Activated T-helper 1 cell treated with anti-CD3 and anti-CD28 coated beads, Interleukin-12 subunit alpha, Interleukin-12 subunit beta, Interleukin-2, Interleukin-4 antibody, amounts not matched to agents 30 ng/mL and 10 ng/mL and 1 ng/mL, durations not matched to agents 14 hours and 24 hours and 36 hours (primary cell): ENCODE measurements at regions of chr1 and their contacts with region 1.

Region 1: GRCh38 chr1:8649027-8649426 is 168.4 kb downstream of the RERE start:
- DNase-seq: no peak
- H3K4me3 Mint-ChIP-seq: no peak overlapping the region
- H3K27ac Mint-ChIP-seq: no peak overlapping the region
- H3K4me1 Mint-ChIP-seq: peaks cover 76% of the 10 kb centered on the region
- H3K27me3 Mint-ChIP-seq: no peaks in the 10 kb centered on the region

Region 2: DNA sequence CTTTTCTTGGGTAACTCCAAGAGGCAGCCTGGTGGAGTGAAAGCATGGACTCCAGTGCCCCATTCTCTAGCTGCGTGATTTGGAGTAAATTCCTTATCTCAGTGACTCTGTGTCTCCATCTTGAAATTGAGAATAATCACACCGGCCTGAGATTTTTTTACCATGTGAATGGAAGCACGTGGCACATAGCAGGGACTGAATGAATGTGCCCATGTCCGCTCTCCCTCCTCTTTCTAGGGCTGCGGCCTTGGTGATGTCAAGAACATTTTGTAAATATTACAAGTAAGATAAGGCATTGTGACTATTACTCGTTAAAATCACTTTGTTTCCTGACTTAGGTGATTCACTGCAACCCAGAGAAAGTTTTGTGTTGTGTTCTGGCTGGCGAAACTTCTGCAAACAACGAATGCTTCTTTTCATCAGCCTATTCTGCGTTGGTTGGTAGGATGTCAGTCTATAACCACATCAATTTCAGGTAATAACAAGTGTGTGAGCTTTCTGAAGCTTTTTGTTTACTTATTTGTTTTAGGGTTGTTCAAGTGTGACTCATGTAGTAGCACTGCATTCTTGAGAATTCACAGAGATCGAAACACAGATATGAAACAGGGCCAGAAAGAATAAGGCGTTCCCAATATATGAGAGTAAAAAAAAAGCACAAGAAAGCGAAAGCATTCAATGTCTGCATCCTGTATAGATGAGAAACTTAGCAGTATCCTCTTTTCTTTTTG is 466.8 kb before region 1 on chr1:
- intact Hi-C with region 1: no loop called
- DNase-seq: peak; percentile 26
- H3K4me3 Mint-ChIP-seq: peak overlapping the region; percentile 53
- H3K27ac Mint-ChIP-seq: peak overlapping the region; percentile 70
- H3K4me1 Mint-ChIP-seq: peaks cover 21% of the 10 kb centered on the region
- H3K27me3 Mint-ChIP-seq: peaks cover 7% of the 10 kb centered on the region

Region 3: DNA sequence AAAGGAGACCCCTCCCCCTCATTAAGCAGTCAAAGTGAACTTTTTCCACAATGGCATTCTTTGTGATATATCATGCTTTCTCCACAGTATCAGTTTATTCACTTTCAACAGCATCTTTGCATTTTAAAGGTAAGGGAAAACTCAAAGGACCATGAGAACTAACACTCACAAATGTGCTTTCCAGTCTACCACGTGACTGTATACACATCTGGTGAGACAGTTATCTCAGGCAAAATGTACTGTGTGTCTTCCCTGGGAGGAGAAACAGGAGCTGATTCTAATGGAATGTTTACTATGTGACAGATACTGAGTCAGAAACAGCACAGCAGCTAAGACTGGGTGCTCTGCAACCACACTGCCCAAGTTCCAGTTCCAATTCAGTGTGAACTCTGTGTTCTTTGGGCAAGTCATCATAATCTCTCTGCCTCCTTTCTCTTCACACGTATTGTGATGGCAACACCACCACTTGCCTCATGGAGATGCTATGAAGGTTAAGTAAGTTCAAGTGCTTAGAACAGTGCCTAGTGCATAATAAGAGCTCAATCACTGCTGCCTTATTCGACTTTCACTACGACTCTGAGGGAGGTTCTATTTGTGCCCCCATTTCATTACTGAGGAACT is 252.1 kb before region 1 on chr1:
- intact Hi-C with region 1: loop called (anchors 1 kb)
- DNase-seq: no peak
- H3K4me3 Mint-ChIP-seq: no peak overlapping the region
- H3K27ac Mint-ChIP-seq: peak overlapping the region; percentile 71
- H3K4me1 Mint-ChIP-seq: peaks cover 63% of the 10 kb centered on the region
- H3K27me3 Mint-ChIP-seq: no peaks in the 10 kb centered on the region

Region 4: GRCh38 chr1:8540261-8540941 is 108.6 kb before region 1 on chr1:
- intact Hi-C with region 1: loop called (anchors 1 kb)
- DNase-seq: no peak
- H3K4me3 Mint-ChIP-seq: peak overlapping the region; percentile 65
- H3K27ac Mint-ChIP-seq: peak overlapping the region; percentile 91
- H3K4me1 Mint-ChIP-seq: peaks cover 51% of the 10 kb centered on the region
- H3K27me3 Mint-ChIP-seq: no peaks in the 10 kb centered on the region

Region 5: DNA sequence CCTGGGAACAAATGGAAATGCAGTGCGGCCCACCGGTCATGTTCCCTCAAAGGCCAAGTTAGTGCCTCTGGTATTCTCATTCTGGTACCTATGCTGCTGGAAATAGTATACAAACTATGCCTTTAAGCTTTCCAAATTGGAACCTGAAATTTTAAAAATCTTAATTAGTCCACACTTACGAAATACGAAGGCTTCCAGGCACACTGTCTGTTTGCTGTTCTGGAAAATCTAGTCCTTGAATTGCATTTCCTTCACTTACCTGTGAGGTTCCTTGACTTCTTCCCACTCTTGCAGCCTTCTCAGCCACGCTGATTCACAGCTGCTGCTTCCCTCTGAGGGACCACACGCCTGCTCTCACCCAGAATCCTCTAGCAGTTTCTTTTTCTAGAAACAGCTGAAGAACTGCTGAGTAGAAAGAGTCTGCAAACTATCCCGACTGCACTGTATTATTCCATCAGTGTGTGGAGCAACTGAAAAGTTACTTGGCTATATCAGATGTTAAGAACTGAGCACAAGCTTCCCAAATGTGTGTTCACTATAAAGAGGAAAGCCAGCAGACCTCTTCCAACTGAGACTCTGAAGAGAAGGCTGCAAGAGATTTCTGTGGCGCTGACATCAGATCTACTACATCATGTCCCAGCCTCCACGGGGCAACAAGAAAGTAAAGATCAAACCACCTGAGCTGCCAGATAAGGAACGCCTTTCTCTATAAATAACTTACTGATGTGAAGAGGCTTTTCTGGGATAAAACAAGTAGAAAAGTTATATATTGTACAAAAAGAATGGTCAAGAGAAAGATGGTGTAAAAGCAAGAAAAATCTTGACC is 58.3 kb before region 1 on chr1:
- intact Hi-C with region 1: no loop called
- DNase-seq: no peak
- H3K4me3 Mint-ChIP-seq: peak overlapping the region; percentile 6
- H3K27ac Mint-ChIP-seq: peak overlapping the region; percentile 15
- H3K4me1 Mint-ChIP-seq: peaks cover 40% of the 10 kb centered on the region
- H3K27me3 Mint-ChIP-seq: no peaks in the 10 kb centered on the region

Region 6: DNA sequence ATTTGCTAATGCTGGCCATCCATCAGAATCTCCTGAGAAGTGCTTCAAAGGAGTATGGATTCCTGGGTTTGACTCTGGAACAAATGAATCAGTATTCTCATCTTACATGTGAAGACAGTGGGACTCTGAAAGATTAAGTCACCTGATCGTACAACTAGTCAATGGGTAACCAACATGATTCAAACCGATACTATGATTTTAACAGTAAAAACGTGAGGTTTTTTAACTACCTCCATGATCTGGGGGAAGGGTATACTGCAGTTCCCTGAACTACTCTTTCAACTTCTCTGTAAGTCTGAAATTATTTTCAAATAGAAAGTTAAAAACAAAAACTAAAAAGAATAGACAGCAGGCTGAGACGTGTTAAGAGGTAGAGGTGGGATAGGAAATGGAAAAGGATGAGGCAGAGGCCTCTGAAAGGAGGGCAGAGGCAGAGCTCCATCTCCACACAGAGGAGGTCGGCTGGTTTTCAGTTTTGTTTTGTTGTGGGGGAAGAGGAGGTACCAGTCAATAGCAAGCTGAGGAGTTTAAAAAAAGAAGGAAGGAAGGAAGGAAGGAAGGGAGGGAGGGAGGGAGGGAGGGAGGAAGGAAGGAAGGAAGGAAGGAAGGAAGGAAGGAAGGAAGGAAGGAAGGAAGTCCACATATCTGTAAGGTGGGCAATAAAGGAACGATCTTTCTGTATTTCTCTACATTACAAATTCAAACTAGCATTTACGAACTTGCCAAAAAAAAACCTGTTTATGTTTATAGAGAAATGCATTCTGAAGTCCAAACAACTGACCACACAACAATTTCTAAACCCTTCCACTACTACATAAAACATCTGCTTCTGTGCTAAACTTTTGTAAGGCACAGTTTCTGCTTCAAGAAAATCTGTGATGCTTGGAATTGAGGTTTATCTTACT is 44.7 kb before region 1 on chr1:
- intact Hi-C with region 1: loop called (anchors 1 kb)
- DNase-seq: peak; percentile 34
- H3K4me3 Mint-ChIP-seq: peak overlapping the region; percentile 61
- H3K27ac Mint-ChIP-seq: peak overlapping the region; percentile 94
- H3K4me1 Mint-ChIP-seq: peaks cover 48% of the 10 kb centered on the region
- H3K27me3 Mint-ChIP-seq: no peaks in the 10 kb centered on the region

Region 7: DNA sequence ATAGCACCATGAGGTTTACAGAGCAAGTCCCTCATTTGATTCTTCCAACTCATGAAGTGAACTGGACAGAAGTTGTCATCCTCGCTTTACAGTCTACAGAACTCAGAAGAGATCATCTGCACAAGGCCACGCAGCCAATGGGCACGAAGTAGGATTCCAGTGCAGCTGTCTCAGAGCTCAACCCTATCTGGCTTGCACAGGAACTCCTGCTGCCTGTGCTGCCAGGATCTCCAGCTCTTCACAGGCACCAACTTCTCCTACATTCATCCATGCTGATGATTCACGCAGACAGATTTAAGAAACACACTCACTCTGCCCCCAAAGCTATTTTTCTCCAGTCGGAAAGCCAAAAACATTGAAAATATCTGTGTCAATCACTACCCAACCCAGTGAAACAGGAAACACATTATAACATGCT is 11.4 kb after region 1 on chr1:
- intact Hi-C with region 1: loop called (anchors 1 kb)
- DNase-seq: no peak
- H3K4me3 Mint-ChIP-seq: no peak overlapping the region
- H3K27ac Mint-ChIP-seq: no peak overlapping the region
- H3K4me1 Mint-ChIP-seq: peaks cover 11% of the 10 kb centered on the region
- H3K27me3 Mint-ChIP-seq: peaks cover 1% of the 10 kb centered on the region

Region 8: DNA sequence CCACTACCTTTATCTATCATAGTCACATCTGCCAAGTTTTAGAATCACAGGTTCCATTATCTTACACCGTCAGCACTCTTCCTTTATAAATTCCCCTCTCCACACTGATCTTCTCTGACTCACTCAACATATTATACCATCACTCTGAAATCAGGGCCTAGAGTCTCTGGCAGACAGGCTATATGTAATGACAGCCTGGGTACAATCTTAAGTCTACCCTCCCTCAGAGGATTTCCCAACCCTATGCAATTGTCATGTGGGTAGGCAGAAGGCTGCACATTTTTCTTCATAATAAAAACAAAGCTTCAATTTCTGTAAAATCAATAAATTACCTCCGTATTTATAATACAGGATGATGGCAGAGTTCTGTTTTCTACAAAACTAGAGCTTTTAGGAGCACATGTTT is 30.4 kb after region 1 on chr1:
- intact Hi-C with region 1: loop called (anchors 1 kb)
- DNase-seq: no peak
- H3K4me3 Mint-ChIP-seq: no peak overlapping the region
- H3K27ac Mint-ChIP-seq: no peak overlapping the region
- H3K4me1 Mint-ChIP-seq: peaks cover 23% of the 10 kb centered on the region
- H3K27me3 Mint-ChIP-seq: no peaks in the 10 kb centered on the region

Region 9: DNA sequence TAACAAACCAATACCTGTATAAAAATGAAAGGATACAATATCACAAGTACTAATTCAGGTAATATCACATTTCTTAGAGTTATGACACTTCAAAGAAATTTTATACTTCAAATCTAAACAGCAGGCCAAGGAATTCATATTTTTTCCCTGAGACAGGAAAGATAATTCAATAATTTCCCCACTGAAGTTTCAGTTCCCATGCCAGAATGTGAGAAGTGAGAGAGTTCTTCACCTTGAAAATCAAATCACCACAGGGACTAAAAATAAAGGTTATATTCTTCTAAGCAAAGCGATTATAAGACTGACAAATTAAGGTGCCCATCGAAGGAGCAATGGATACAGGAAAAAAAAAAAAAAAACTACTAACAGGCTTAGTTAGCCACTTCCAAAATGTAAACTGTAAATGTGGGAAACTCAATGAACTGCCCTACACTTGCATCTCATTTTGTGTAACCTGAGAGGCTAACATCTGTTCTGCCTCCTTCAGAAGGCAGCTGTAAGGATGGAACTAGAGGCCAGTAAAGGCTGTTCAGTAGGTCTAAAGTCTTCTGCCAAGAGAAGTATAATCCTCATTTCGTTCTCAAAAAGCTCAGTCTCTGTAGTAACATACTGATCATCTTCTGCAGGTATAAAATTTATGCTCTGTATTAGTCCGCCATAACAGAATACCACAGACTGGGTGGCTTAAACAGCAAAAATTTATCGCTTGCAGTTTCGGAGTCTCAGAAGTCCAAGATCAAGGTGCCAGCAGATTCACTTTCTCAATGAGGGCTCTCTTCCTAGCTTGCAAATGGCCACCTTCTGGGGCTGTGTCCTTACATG is 40.6 kb after region 1 on chr1:
- intact Hi-C with region 1: no loop called
- DNase-seq: no peak
- H3K4me3 Mint-ChIP-seq: no peak overlapping the region
- H3K27ac Mint-ChIP-seq: no peak overlapping the region
- H3K4me1 Mint-ChIP-seq: peaks cover 51% of the 10 kb centered on the region
- H3K27me3 Mint-ChIP-seq: no peaks in the 10 kb centered on the region